Left ventricle myocardium superior (tissue), 1 donor: ENCODE measurements at regions of chr6 and their contacts with region 1.

Region 1: DNA sequence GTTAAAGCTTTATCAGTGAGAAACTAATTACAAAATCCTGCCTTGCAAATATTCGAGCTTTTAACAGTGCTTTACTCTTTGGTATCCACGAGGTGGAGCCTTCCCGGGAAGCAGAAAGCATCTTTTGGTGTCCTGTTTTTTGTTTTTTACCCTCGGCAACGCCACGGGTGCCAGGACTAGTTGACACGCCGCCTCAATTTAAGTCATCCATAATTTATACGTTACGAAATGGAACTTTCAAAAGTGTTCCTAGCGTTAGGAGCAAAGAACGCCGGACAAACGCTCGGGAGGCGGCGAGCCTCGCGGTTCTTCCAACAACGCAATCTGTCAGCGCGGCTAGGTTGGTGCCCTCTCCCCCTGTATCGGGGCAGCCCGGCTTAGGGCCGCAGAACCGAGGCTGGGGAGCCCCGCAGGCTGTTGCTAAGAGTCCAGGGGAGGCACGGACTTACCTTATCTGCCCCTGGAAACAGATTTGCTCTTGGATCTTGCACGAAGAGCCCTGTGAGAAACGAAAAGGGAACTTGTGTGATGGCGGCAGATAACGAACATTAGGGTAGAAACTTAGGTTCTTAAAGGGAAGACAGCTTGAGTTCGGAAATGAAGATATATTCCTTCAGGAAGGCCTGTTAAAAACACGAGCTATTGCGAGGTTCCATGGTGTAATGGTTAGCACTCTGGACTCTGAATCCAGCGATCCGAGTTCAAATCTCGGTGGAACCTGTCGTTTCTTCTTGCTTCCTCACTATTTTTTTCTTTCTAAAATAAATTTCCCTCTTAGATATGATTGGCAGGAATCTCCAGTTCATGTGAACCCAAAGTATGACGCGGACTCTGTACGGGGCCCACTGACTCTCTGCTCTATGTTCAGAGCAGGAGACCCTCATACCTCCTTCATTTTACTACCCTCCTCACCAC is 46.2 kb upstream of the ZNF184 start:
- DNase-seq: peak; percentile 56
- ATAC-seq: peak; percentile 95

Region 2: DNA sequence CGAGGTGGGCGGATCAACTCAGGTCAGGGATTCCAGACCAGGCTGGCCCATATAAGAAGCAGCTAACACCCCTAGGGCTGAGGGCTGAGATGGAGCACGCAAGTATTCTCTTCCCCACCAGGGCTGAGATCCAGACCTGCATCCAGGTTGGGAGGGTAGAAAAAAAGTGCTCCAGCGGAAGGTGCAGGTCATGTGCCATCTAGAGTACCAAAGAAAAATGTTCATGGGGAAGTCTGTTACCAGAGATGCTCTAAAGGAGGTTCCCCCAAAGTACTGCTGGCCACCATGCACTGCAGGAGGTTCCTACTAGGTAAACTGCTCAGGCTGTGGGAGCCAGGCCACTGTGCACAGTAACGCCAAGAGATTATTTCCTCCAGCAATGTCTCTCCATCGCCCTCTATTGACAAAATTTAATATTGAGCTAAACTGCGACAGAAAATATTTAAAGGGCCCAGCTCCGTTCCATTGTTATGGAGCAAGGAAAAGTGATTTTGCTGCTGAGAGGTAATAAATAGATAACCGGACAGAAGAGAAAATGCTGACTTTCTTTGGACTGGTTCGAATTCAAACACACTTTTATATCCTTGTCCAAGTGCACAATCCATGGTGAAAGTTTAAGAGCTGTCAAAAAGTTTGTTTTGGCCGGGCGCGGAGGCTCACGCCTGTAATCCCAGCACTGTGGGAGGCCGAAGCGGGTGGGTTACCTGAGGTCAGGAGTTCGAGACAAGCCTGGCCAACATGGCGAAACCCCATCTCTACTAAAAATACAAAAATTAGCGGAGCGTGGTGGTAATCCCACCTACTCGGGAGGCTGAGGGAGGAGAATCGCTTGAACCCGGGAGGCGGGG is 233.1 kb after region 1 on chr6:
- intact Hi-C with region 1: loop called (anchors 1 kb)
- DNase-seq: peak; percentile 54
- ATAC-seq: peak; percentile 94